Heart left ventricle (tissue), 16 donors: ENCODE measurements at regions of chr5 and their contacts with region 1.

Region 1: DNA sequence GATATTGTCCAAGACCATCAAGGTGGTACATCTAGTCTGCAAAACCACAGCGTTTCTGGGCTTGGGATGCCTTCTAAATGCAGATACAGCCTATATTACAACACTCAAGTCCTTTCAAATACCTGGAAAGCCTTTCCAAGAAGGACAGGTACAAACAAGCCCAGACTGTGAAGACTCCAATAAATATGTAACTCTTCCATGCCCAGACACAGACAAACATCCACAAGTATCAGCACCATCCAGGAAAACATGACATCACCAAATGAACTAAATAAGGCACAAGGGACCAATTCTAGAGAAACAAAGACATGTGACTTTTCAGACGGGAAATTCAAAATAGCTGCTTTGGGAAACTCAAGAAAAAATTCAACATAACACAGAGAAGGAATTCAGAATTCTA is 152.7 kb upstream of the POC5 start:
- DNase-seq: no peak
- ATAC-seq: no peak
- H3K4me3 ChIP-seq: no peak overlapping the region
- H3K27ac ChIP-seq: no peak overlapping the region
- H3K4me1 ChIP-seq: no peaks in the 10 kb centered on the region
- H3K27me3 ChIP-seq: no peaks in the 10 kb centered on the region
- CTCF ChIP-seq: no peak
- POLR2A ChIP-seq: no peak

Region 2: GRCh38 chr5:75632321-75632720 is 237.6 kb before region 1 on chr5:
- intact Hi-C with region 1: no loop called
- DNase-seq: peak in 2 of 5 donors; percentile 37 to 41
- ATAC-seq: peak; percentile 72 to 95 (median 90)
- H3K4me3 ChIP-seq: no peak overlapping the region
- H3K27ac ChIP-seq: peak overlapping the region in 4 of 12 donors; percentile 32 to 73 (median 52)
- H3K4me1 ChIP-seq: peaks cover 0 to 9% (median 0%) of the 10 kb centered on the region in 12 donors
- H3K27me3 ChIP-seq: no peaks in the 10 kb centered on the region
- CTCF ChIP-seq: no peak
- POLR2A ChIP-seq: no peak

Region 3: DNA sequence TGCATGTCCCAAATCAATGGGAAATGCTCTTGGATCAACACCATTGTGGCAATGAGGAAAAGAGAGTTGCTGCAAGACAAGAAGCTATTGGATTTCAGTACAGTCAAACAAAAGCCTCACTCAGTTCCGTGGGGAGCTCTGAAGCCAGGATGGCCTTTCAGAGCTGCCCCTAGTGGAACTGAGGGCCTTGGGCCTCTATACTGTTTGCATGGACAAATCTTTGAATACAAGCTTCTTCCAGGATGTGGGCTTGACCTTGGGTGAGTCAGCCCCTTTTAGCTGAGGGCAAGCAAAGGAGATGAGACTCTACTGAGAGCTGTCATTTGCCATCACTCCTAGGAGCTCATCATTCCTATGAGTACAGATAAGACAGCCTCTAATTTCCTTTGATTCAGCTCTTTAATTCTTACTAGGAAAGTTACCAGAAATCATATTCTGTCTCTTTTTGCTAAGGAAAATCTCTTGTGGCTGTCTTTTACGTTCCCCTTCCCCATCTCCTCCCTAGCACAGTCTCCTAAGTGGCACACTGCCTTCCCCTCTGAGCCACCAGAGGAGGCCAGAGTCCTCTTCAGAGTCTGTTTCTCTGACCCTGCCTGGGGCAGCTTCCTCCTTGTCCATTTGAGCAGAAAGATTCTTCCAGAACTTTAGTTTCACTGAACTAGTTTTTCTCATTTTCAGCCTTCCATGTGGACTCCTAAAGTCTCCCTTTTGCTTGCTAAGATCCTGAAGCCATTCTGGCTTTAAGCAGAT is 16.1 kb after region 1 on chr5:
- intact Hi-C with region 1: loop called in 1 of 10 experiments (anchors 2 kb)
- DNase-seq: no peak
- ATAC-seq: no peak
- H3K4me3 ChIP-seq: no peak overlapping the region
- H3K27ac ChIP-seq: no peak overlapping the region
- H3K4me1 ChIP-seq: no peaks in the 10 kb centered on the region
- H3K27me3 ChIP-seq: no peaks in the 10 kb centered on the region
- CTCF ChIP-seq: peak in 2 of 12 donors; percentile 12 to 15
- POLR2A ChIP-seq: no peak

Region 4: GRCh38 chr5:76029739-76030138 is 159.8 kb after region 1 on chr5:
- intact Hi-C with region 1: loop called in 1 of 10 experiments (anchors 10 kb)
- DNase-seq: no peak
- ATAC-seq: no peak
- H3K4me3 ChIP-seq: no peak overlapping the region
- H3K27ac ChIP-seq: no peak overlapping the region
- H3K4me1 ChIP-seq: no peaks in the 10 kb centered on the region
- H3K27me3 ChIP-seq: no peaks in the 10 kb centered on the region
- CTCF ChIP-seq: no peak
- POLR2A ChIP-seq: no peak